ENCODE measurements at regions of chr3 and their contacts with region 1.

Region 1: DNA sequence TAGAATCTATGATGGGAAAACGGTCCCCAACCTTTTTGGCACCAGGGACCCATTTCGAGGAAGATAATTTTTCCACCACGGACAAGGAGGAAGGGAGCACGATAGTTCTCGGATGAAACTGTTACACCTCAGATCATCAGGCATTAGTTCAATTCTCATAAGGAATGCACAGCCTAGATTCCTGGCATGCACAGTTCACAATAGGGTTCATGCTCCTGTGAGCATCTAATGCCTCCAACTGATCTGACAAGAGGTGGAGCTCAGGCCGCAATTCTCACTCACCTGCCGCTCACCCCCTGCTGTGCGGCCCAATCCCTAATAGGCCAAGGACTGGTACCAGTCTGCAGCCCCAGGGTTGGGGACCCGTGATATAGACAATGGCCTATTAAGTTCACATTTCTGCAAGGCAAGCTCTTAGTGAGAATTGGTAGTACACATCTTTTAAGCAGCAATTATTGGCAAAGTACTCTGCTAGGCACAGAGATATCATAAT is 26.5 kb downstream of the CD200R1 start:
- DNase-seq: no peak
- ATAC-seq: no peak
- H3K4me3 ChIP-seq: no peak overlapping the region
- H3K4me3 Mint-ChIP-seq: no peak overlapping the region
- H3K27ac ChIP-seq: no peak overlapping the region
- H3K27ac Mint-ChIP-seq: peak overlapping the region in 8 of 9 donors; percentile 16 to 80 (median 54)
- H3K4me1 ChIP-seq: no peaks in the 10 kb centered on the region
- H3K4me1 Mint-ChIP-seq: peaks cover 0 to 53% (median 27%) of the 10 kb centered on the region in 7 donors
- H3K27me3 ChIP-seq: no peaks in the 10 kb centered on the region
- H3K27me3 Mint-ChIP-seq: no peaks in the 10 kb centered on the region

Region 2: DNA sequence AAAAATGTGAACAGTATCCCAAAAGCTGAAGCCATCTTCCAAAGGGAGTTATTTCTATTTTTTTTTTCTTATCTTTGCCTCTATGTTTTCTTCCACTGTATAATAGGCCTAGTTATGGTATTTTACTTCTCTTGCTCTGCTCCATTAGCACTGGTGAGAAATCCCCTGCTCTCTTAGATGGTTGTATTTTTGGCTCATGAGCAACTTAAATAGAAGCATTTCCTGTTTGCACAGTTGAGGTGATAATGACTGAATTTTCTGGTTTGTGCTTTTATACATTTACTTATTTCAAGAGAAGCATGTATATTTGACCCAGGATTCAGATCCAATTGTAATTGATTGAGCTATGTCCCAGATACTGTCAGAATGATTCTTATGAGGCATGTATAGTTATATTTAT is 40.1 kb before region 1 on chr3:
- CTCF ChIA-PET with region 1: no interaction called
- POLR2A ChIA-PET with region 1: no interaction called
- intact Hi-C with region 1: loop called in 1 of 2 experiments (anchors 5 kb)
- DNase-seq: peak in 2 of 9 donors; percentile 1
- ATAC-seq: peak; percentile 44
- H3K4me3 ChIP-seq: no peak overlapping the region
- H3K4me3 Mint-ChIP-seq: peak overlapping the region in 1 of 10 donors; percentile 27
- H3K27ac ChIP-seq: no peak overlapping the region
- H3K27ac Mint-ChIP-seq: peak overlapping the region in 1 of 9 donors; percentile 19
- H3K4me1 ChIP-seq: peaks cover 0 to 5% of the 10 kb centered on the region in 2 donors
- H3K4me1 Mint-ChIP-seq: peaks cover 7 to 37% (median 20%) of the 10 kb centered on the region in 7 donors
- H3K27me3 ChIP-seq: no peaks in the 10 kb centered on the region
- H3K27me3 Mint-ChIP-seq: no peaks in the 10 kb centered on the region

Measured in naive thymus-derived CD4-positive, alpha-beta T cell (primary cell).